ENCODE measurements at regions of chr16 and their contacts with region 1.

Region 1: DNA sequence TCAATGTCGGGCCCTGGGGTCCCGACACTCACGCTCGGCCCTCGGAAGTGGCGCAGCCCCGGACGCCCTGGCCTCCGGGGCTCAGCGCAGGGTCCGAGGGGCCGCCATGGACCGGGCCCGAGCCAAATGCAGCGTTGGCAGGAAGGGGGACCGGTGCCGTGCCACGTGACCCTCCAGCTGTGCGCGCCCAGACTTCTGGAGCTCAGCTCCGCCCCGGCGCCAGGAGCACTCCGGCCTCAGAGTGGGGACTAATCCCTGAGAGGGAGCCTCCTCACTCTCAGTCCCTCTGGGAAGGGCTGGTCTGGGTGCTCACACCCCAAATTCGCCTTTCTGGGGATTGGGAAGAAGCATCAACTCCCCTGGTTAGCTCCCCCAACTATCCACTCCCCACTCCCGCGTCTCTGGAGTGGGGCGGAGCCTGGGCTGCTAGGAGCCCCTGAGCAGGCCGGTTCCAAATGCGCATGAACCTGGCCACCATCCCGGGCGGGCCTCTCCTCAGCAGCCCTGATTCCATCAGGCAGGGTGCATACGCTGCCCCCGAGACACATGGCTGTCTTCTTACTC is at the start of gene B3GNT9:
- DNase-seq: no peak
- H3K4me3 ChIP-seq: peak within 1 kb of the TSS; percentile 64
- CTCF ChIP-seq: no peak

Region 2: DNA sequence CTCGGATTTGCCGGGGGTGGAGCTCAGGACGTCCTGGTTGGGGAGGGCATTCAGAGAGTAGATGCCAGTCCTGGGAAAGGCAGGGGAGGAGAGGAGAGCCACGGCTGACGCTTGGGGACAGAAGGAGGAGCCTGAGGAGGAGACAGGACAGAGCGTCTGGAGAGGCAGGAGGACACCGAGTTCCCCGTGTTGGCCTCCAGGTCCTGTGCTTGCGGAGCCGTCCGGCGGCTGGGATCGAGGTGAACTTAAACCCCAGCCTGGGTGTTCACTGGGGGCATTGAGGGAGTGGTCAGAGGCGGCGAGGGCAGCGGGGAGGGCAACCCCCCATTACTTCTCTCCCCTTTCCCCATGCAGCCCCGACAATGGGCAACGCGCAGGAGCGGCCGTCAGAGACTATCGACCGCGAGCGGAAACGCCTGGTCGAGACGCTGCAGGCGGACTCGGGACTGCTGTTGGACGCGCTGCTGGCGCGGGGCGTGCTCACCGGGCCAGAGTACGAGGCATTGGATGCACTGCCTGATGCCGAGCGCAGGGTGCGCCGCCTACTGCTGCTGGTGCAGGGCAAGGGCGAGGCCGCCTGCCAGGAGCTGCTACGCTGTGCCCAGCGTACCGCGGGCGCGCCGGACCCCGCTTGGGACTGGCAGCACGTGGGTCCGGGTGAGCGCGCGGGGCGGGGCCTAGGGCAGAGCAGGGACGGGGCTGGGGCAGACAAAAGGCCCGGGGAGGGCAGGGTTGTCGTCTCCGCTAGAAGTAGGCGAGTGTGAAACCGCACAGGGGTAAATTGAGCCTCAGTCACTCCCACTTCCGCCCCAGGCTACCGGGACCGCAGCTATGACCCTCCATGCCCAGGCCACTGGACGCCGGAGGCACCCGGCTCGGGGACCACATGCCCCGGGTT is 23.1 kb after region 1 on chr16:
- CTCF ChIA-PET with region 1: interaction called, 54 read pairs
- POLR2A ChIA-PET with region 1: interaction called, 4 read pairs
- DNase-seq: no peak
- H3K4me3 ChIP-seq: peak overlapping the region; percentile 56
- CTCF ChIP-seq: peak; percentile 58

Region 3: GRCh38 chr16:67260426-67261075 is 109.6 kb after region 1 on chr16:
- CTCF ChIA-PET with region 1: no interaction called
- POLR2A ChIA-PET with region 1: no interaction called
- DNase-seq: peak; percentile 19
- H3K4me3 ChIP-seq: no peak overlapping the region
- CTCF ChIP-seq: peak; percentile 77